ENCODE measurements at regions of chrX and their contacts with region 1.

Region 1: GRCh38 chrX:149539283-149540130 is 1.3 kb upstream of the EOLA1 start:
- DNase-seq: peak; percentile 88
- ATAC-seq: peak; percentile 62
- H3K4me3 ChIP-seq: peak overlapping the region; percentile 72
- H3K27ac ChIP-seq: peak overlapping the region; percentile 62
- H3K4me1 ChIP-seq: peaks cover 8% of the 10 kb centered on the region; the same call in 1 of the 2 replicates
- H3K27me3 ChIP-seq: no peaks in the 10 kb centered on the region
- CTCF ChIP-seq: no peak

Region 2: GRCh38 chrX:149495573-149496071 is 43.9 kb before region 1 on chrX:
- CTCF ChIA-PET with region 1: no interaction called
- POLR2A ChIA-PET with region 1: no interaction called
- intact Hi-C with region 1: loop called (anchors 2 kb)
- DNase-seq: peak; percentile 92
- ATAC-seq: peak; percentile 84
- H3K4me3 ChIP-seq: no peak overlapping the region
- H3K27ac ChIP-seq: peak overlapping the region; percentile 89
- H3K4me1 ChIP-seq: peaks cover 49% of the 10 kb centered on the region
- H3K27me3 ChIP-seq: no peaks in the 10 kb centered on the region
- CTCF ChIP-seq: no peak

Region 3: GRCh38 chrX:149510386-149510785 is 29.1 kb before region 1 on chrX:
- CTCF ChIA-PET with region 1: interaction called, 3 read pairs
- POLR2A ChIA-PET with region 1: no interaction called
- intact Hi-C with region 1: loop called (anchors 2 kb)
- DNase-seq: peak; percentile 54
- ATAC-seq: peak; percentile 21; the same call in 1 of the 2 replicates
- H3K4me3 ChIP-seq: no peak overlapping the region
- H3K27ac ChIP-seq: peak overlapping the region; percentile 81
- H3K4me1 ChIP-seq: peaks cover 63% of the 10 kb centered on the region
- H3K27me3 ChIP-seq: no peaks in the 10 kb centered on the region
- CTCF ChIP-seq: peak; percentile 51; the same call in 1 of the 2 replicates

Region 4: GRCh38 chrX:149938427-149939270 is 399.1 kb after region 1 on chrX and contains the start of gene EOLA2:
- CTCF ChIA-PET with region 1: no interaction called
- POLR2A ChIA-PET with region 1: interaction called, 32 read pairs
- intact Hi-C with region 1: no loop called
- DNase-seq: peak; percentile 98
- ATAC-seq: peak; percentile 68
- H3K4me3 ChIP-seq: peak within 1 kb of the TSS; percentile 90
- H3K27ac ChIP-seq: peak within 1 kb of the TSS; percentile 95
- H3K4me1 ChIP-seq: peaks cover 4% of the 10 kb centered on the region; the same call in 1 of the 2 replicates
- H3K27me3 ChIP-seq: no peaks in the 10 kb centered on the region
- CTCF ChIP-seq: peak; percentile 56
- total RNA-seq, gene EOLA2: 35.7 and 49.8 TPM in 2 replicates